ENCODE measurements at regions of chr9 and their contacts with region 1.

Region 1: GRCh38 chr9:4489919-4490704 is at the start of gene SLC1A1:
- DNase-seq: peak; percentile 70 to 83 (median 81)
- ATAC-seq: peak; percentile 91 to 93
- H3K4me3 ChIP-seq: peak within 1 kb of the TSS; percentile 79
- H3K27ac ChIP-seq: peak within 1 kb of the TSS; percentile 47
- H3K4me1 ChIP-seq: no peaks in the 10 kb centered on the region
- H3K27me3 ChIP-seq: no peaks in the 10 kb centered on the region
- total RNA-seq, gene SLC1A1: 1.1 to 2.1 (median 1.6) TPM

Region 2: GRCh38 chr9:4548811-4549725 is 59.0 kb after region 1 on chr9:
- intact Hi-C with region 1: loop called in 1 of 4 experiments (anchors 5 kb)
- DNase-seq: peak in 2 of 3 donors; percentile 56 to 66
- ATAC-seq: peak in 1 of 2 donors; percentile 14
- H3K4me3 ChIP-seq: no peak overlapping the region
- H3K27ac ChIP-seq: peak overlapping the region; percentile 33
- H3K4me1 ChIP-seq: peaks cover 11% of the 10 kb centered on the region
- H3K27me3 ChIP-seq: no peaks in the 10 kb centered on the region

Region 3: GRCh38 chr9:4620881-4621555 is 130.9 kb after region 1 on chr9:
- intact Hi-C with region 1: no loop called
- DNase-seq: no peak
- ATAC-seq: no peak
- H3K4me3 ChIP-seq: no peak overlapping the region
- H3K27ac ChIP-seq: no peak overlapping the region
- H3K4me1 ChIP-seq: no peaks in the 10 kb centered on the region
- H3K27me3 ChIP-seq: no peaks in the 10 kb centered on the region

Region 4: DNA sequence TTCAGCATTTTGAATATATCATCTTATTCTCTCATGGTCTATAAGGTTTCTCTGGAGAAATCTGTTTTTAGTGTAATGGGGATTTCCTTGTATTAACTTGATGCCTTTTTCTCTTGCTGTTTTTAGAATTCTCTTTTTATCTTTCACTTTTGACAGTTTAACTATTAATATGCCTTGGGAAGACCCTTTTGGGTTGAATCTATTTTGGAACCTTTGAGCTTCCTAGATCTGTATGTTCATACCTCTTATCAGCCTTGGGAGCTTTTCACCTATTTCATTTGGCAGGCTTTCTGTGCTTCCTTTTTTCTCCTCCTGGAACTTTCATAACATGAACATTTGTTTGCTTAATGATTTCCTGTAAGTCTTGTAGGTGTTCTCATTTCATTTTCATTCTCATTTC is 324.8 kb after region 1 on chr9:
- intact Hi-C with region 1: no loop called
- DNase-seq: no peak
- ATAC-seq: no peak
- H3K4me3 ChIP-seq: no peak overlapping the region
- H3K27ac ChIP-seq: no peak overlapping the region
- H3K4me1 ChIP-seq: no peaks in the 10 kb centered on the region
- H3K27me3 ChIP-seq: no peaks in the 10 kb centered on the region